ENCODE measurements at regions of chr15 and their contacts with region 1.

Region 1: GRCh38 chr15:74134387-74135027 is 4.1 kb downstream of the ISLR2 start:
- DNase-seq: peak in 1 of 10 donors; percentile 85

Region 2: DNA sequence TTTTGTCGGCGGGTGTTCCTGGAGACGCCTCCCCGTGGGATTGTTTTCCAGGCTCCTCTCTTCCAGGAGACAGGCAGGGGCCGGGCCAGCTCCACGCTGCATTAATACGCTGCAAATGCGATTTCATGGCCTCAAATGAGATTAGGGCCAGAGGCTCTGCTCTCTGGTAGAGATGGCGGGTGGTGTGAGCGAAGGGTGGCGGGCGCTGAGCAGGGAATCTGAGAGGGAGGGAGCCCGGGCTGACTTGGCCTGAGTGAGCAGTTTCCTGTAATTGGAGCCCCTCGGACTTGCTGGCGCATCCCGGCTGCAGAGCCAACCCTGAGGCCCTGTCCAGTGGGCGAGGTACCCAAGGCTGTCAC is 94.2 kb after region 1 on chr15:
- intact Hi-C with region 1: loop called (anchors 10 kb)
- DNase-seq: peak in 2 of 10 donors; percentile 71 to 72

Measured in posterior cingulate gyrus (tissue), 11 donors.